ENCODE measurements at regions of chr18 and their contacts with region 1.

Region 1: GRCh38 chr18:48230467-48231113 is 178.6 kb downstream of the ZBTB7C start:
- DNase-seq: peak; percentile 79
- H3K4me3 ChIP-seq: peak overlapping the region in 1 of 2 experiments; percentile 50; a peak in 1 of 4 replicates
- H3K27ac ChIP-seq: peak overlapping the region in 1 of 2 experiments; percentile 83; a peak in 2 of 4 replicates
- H3K4me1 ChIP-seq: peaks cover 0 to 44% of the 10 kb centered on the region in 2 experiments; a peak in 2 of 4 replicates
- H3K27me3 ChIP-seq: no peaks in the 10 kb centered on the region; the same call in 1 of the 2 replicates
- CTCF ChIP-seq: peak; percentile 69
- EP300 ChIP-seq: no peak
- RAD21 ChIP-seq: peak; percentile 95

Region 2: GRCh38 chr18:48037481-48038271 is 192.9 kb before region 1 on chr18:
- CTCF ChIA-PET with region 1: interaction called, 62 read pairs
- POLR2A ChIA-PET with region 1: interaction called, 5 read pairs
- DNase-seq: peak; percentile 51
- H3K4me3 ChIP-seq: no peak overlapping the region
- H3K27ac ChIP-seq: peak overlapping the region in 1 of 2 experiments; percentile 100; a peak in 2 of 4 replicates
- H3K4me1 ChIP-seq: peaks cover 0 to 73% of the 10 kb centered on the region in 2 experiments; a peak in 1 of 4 replicates
- H3K27me3 ChIP-seq: no peaks in the 10 kb centered on the region
- CTCF ChIP-seq: peak; percentile 31
- EP300 ChIP-seq: no peak
- RAD21 ChIP-seq: peak; percentile 70

Region 3: GRCh38 chr18:48136531-48137332 is 93.9 kb before region 1 on chr18:
- CTCF ChIA-PET with region 1: interaction called, 14 read pairs
- POLR2A ChIA-PET with region 1: interaction called, 4 read pairs
- DNase-seq: peak; percentile 86
- H3K4me3 ChIP-seq: peak overlapping the region; percentile 41 to 47; a peak in 3 of 4 replicates
- H3K27ac ChIP-seq: peak overlapping the region in 1 of 2 experiments; percentile 86; a peak in 2 of 4 replicates
- H3K4me1 ChIP-seq: peaks cover 0 to 72% of the 10 kb centered on the region in 2 experiments; a peak in 2 of 4 replicates
- H3K27me3 ChIP-seq: peaks cover 54% of the 10 kb centered on the region
- CTCF ChIP-seq: no peak
- EP300 ChIP-seq: no peak
- RAD21 ChIP-seq: no peak

Region 4: DNA sequence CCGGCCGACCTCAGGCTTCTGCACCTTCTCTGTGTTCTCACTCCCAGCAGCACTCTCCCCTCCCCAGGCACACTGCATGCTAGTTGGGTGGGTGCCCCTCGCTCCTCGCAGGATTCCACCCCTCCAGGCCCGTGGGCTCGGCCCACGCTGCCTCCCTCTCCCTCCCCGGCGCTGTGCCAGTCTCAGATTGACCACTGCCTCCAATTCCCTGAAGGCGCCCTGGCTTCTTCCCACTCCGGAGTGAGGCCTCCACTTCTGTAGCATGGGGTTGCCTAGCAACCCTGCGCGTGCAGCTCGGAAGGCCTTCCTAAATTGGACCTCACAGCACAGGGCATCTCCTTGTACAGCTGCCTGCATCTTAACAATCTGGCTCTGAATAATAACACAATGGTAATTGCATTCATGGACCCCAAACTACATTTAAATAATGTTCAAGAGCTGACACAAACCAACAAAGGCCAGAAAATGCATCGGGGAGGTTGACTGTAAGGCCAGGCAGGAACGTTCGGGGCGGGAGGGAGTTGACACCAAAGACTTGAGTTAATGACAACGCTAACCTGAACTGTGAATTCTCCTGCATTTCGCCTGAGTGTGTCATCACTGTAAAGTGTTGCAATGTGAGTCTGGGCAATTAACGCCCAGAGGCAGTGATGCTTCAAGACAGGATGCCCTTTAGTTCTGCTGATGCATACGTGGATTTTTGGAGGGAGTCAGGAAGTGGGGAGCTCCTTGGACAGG is 44.4 kb before region 1 on chr18:
- CTCF ChIA-PET with region 1: interaction called, 20 read pairs
- POLR2A ChIA-PET with region 1: interaction called, 3 read pairs
- DNase-seq: peak; percentile 67
- H3K4me3 ChIP-seq: no peak overlapping the region; a peak in 1 of 4 replicates
- H3K27ac ChIP-seq: peak overlapping the region in 1 of 2 experiments; percentile 81; a peak in 2 of 4 replicates
- H3K4me1 ChIP-seq: peaks cover 0 to 47% of the 10 kb centered on the region in 2 experiments; a peak in 2 of 4 replicates
- H3K27me3 ChIP-seq: peaks cover 12% of the 10 kb centered on the region; the same call in 1 of the 2 replicates
- CTCF ChIP-seq: no peak
- EP300 ChIP-seq: no peak
- RAD21 ChIP-seq: no peak

Region 5: DNA sequence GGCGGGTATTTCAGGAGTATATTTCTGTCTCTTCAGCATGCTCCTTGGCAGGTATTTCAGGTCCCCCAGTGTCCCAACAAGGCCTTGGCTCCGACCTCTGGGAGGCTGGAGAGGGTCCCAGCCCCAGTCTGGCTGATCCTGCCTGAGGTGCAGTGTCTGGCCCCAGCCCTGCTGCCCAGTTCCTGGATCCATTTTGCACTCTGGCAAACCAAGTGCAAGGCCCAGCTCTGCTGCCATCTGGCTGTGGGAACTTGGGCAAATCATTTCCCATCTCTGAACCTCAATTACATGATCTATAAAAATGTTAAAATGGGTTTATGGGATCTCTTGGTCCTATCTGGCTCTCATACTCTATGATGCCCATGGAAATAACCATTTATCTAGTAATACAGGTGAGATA is 115.0 kb after region 1 on chr18:
- CTCF ChIA-PET with region 1: interaction called, 20 read pairs
- POLR2A ChIA-PET with region 1: no interaction called
- DNase-seq: no peak
- H3K4me3 ChIP-seq: no peak overlapping the region
- H3K27ac ChIP-seq: no peak overlapping the region
- H3K4me1 ChIP-seq: peaks cover 0 to 54% of the 10 kb centered on the region in 2 experiments; a peak in 1 of 4 replicates
- H3K27me3 ChIP-seq: peaks cover 13% of the 10 kb centered on the region
- CTCF ChIP-seq: peak; percentile 54
- EP300 ChIP-seq: no peak
- RAD21 ChIP-seq: peak; percentile 63

Region 6: DNA sequence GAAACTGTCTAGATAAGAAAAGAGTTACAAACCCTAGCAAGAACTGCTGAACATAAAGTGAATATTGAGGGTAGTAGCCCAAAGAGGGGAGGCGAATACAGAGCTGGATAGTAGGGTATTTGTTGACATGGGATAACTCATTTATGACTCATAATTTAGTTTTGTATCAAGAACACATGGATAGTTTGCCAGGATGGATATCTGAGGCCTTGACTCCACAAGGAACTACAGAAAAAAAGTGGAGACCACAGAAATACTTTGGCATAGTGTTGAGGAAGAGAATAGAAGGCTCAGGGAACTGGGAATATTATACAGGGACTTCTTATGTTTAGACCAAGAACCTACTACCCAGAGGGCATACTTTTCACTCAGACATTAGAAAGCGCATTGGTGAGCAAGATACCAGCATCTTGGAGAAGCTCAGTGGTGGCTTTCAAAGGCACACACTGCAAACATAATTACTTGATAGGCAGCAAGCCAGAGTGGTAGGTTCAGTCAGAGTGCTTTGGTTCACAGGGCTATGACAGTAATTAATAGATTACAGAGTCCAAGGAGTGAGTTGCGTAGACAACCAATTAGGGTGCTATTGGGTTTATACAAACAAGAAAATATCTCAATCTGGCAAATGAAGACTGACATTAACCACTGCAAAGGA is 230.5 kb after region 1 on chr18:
- CTCF ChIA-PET with region 1: interaction called, 11 read pairs
- POLR2A ChIA-PET with region 1: no interaction called
- DNase-seq: no peak
- H3K4me3 ChIP-seq: no peak overlapping the region
- H3K27ac ChIP-seq: no peak overlapping the region
- H3K4me1 ChIP-seq: peaks cover 0 to 10% of the 10 kb centered on the region in 2 experiments; a peak in 2 of 4 replicates
- H3K27me3 ChIP-seq: no peaks in the 10 kb centered on the region
- CTCF ChIP-seq: no peak
- EP300 ChIP-seq: no peak
- RAD21 ChIP-seq: no peak

Measured in SK-N-SH (cell line).